HepG2 (cell line): ENCODE measurements at regions of chr9 and their contacts with region 1.

Region 1: DNA sequence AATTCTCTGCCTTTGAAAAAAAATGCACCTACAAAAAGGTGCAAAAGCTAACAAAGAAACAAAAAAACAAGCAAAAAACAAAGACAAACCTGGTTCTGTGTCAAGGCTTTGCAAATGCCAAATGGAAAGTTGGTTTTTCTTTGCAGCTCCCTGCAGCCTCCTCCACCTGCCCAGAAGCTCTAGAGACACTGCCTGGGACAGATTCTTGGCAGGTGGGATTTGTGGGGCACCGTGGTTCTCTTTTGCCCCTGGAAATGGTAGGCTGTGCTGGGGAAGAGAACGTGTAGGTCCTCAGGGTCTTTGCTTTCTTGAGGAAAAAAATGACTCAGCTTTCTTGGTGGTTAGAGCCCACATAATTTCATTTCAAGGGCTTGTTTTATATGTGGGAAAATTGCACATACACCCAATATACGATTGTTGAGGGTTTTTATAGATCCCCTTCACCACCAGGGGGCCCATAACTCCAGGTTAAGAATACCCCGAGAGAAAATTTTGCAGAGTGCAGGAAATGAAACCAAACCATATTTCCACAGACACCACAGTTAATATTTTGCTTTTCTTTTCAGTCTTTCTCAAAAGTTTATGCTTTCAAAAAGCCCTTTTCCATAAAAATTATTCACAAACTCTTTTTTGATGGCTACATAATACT is 58.7 kb downstream of the NXNL2 start:
- DNase-seq: peak; percentile 46
- ATAC-seq: peak; percentile 74
- H3K4me3 ChIP-seq: no peak overlapping the region
- H3K27ac ChIP-seq: no peak overlapping the region
- H3K4me1 ChIP-seq: no peaks in the 10 kb centered on the region
- H3K27me3 ChIP-seq: peaks cover 0 to 10% of the 10 kb centered on the region in 2 experiments; a peak in 2 of 5 replicates
- CTCF ChIP-seq: peak; percentile 60
- EP300 ChIP-seq: no peak
- POLR2A ChIP-seq: no peak
- RAD21 ChIP-seq: 0 out of 2 replicates have a peak, but pooled peaks have one; percentile 12

Region 2: DNA sequence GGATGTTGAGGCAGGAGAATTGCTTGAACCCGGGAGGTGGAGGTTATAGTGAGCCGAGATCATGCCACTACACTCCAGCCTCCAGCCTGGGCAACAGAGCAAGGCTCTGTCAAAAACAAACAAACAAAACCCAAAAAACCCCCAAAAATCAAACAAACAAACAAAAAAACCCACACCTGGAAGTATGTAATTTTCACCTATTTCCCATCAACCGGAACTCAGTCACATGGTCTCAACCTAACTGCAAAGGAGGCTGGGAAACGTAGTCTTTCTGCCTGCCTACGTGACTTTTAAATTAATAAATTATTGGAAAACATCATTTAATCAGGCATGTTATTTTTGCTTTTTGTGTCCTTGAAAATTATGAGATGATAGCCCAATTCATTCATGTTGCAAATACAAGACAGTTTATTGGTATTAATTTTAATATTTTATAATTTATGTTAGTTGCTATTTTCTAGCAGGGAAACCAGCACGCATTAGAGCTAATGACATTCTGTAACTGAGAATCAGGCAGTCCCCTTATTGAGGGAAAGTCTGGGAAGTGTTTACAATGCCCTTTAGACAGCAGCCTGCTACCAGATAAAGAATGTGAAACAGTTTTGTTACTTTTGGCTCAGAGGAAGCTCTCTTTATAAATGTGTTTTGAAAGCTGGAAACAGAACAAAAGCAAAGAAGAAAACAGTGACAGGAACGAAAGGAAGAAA is 51.7 kb after region 1 on chr9:
- CTCF ChIA-PET with region 1: no interaction called
- POLR2A ChIA-PET with region 1: no interaction called
- in situ Hi-C with region 1: no loop called
- intact Hi-C with region 1: no loop called
- DNase-seq: no peak
- ATAC-seq: no peak
- H3K4me3 ChIP-seq: no peak overlapping the region
- H3K27ac ChIP-seq: no peak overlapping the region
- H3K4me1 ChIP-seq: no peaks in the 10 kb centered on the region
- H3K27me3 ChIP-seq: peaks cover 0 to 3% of the 10 kb centered on the region in 2 experiments; a peak in 1 of 5 replicates
- CTCF ChIP-seq: no peak
- EP300 ChIP-seq: no peak
- POLR2A ChIP-seq: no peak
- RAD21 ChIP-seq: no peak

Region 3: DNA sequence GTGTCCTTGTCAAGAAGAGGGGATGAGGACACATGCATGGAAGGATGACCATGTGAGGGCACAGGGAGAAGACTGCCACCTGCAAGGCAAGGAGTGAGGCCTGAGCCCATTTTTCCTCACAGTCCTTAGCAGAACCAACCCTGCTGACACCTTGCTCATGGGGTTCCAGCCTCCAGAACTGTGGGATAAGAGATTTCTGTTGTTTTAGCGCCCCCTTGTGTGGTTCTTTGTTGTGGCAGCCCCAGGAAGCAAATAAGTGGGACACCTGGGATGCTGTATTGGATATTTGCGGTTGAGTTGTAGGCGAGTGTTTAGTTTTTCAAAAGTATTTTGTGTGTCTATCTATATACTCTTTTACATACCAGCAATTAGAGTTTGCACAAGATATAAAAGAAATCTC is 147.7 kb after region 1 on chr9:
- CTCF ChIA-PET with region 1: interaction called, 14 read pairs
- POLR2A ChIA-PET with region 1: no interaction called
- in situ Hi-C with region 1: loop called (anchors 5 kb)
- intact Hi-C with region 1: no loop called
- DNase-seq: peak; percentile 23
- ATAC-seq: peak; percentile 50; the same call in 2 of the 3 replicates
- H3K4me3 ChIP-seq: no peak overlapping the region
- H3K27ac ChIP-seq: no peak overlapping the region
- H3K4me1 ChIP-seq: no peaks in the 10 kb centered on the region
- H3K27me3 ChIP-seq: peaks cover 1 to 12% of the 10 kb centered on the region in 2 experiments; a peak in 2 of 5 replicates
- CTCF ChIP-seq: peak; percentile 75
- EP300 ChIP-seq: no peak
- POLR2A ChIP-seq: no peak
- RAD21 ChIP-seq: peak; percentile 69

Region 4: GRCh38 chr9:89000973-89001916 is 407.6 kb after region 1 on chr9:
- CTCF ChIA-PET with region 1: interaction called, 27 read pairs
- POLR2A ChIA-PET with region 1: no interaction called
- in situ Hi-C with region 1: loop called (anchors 5 kb)
- intact Hi-C with region 1: no loop called
- DNase-seq: peak; percentile 65
- ATAC-seq: peak; percentile 96
- H3K4me3 ChIP-seq: no peak overlapping the region
- H3K27ac ChIP-seq: no peak overlapping the region
- H3K4me1 ChIP-seq: no peaks in the 10 kb centered on the region
- H3K27me3 ChIP-seq: peaks cover 0 to 4% of the 10 kb centered on the region in 2 experiments; a peak in 2 of 5 replicates
- CTCF ChIP-seq: peak; percentile 91
- EP300 ChIP-seq: no peak
- POLR2A ChIP-seq: no peak
- RAD21 ChIP-seq: peak; percentile 87